Endothelial cell of umbilical vein (primary cell): ENCODE measurements at regions of chr7 and their contacts with region 1.

Region 1: DNA sequence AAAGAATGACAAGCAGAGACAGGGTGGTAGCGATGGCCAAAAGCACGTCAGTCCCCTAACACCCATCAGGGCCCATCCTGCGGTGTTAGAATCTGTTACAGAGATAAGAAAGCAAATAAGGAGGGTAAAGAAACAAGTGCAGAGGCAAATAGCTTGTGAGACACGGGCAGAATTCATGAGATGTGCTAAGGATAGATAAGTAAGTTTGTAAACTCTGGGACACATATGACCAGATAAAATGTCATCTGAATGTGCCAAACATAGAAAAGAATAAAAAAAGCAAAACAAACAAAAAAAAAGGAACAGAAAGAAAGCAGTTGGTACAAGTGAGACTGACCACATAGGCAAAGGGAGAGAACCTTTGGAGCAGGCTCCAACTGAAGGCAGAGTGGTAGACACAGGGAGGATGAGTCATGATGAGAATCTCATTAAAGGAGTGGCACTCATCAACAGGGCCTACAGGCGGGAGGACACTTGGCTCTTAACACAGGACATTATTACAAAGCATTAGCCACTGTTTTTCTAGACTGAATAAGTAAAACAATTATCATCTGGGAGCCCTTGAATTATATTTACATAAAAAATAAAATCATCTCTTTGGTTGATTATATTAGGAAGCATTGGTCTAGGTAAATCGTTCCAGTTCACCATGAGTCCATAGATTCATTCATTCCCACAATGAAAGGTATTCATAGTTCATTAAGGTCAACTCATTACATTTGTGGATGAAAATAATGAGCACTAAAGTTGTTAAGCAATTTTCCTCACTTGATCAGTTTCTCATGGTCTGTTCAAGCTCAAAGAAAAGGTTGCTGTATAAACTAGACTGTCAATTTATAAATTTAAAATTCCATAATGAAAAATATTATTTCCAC is 21.5 kb upstream of the EPHB6 start:
- DNase-seq: no peak
- H3K4me3 ChIP-seq: no peak overlapping the region
- H3K27ac ChIP-seq: no peak overlapping the region
- H3K4me1 ChIP-seq: no peaks in the 10 kb centered on the region
- H3K27me3 ChIP-seq: peaks cover 0 to 2% of the 10 kb centered on the region in 2 experiments
- CTCF ChIP-seq: no peak
- POLR2A ChIP-seq: no peak

Region 2: DNA sequence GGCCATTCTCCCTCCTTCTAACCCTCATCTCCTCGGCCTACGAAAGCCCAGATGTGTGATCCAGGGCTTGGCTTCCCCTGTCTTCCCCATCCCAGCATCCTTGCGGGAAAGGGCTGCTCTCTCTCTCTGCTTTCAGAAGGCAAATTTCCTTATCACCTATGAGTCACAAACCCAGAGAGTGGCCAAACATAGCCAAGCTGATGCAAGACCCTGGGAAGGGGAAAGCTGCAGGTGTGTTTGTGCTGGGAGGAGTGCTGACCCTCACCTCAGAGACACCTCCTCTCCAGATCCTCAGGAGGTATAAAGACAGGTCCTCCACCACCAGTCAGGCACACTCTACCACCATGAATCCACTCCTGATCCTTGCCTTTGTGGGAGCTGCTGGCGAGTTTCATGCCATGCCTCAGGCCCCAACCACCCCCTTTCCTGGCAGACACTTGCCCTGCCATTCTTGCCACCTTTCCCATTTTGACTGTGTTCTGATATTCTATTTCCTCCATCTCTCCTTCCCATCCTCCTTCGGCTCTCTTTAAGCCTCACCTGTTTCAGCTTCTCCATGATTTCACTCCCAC is 73.3 kb before region 1 on chr7:
- CTCF ChIA-PET with region 1: no interaction called
- POLR2A ChIA-PET with region 1: no interaction called
- dilution Hi-C with region 1: no loop called
- intact Hi-C with region 1: no loop called
- DNase-seq: no peak
- H3K4me3 ChIP-seq: no peak overlapping the region
- H3K27ac ChIP-seq: no peak overlapping the region
- H3K4me1 ChIP-seq: no peaks in the 10 kb centered on the region
- H3K27me3 ChIP-seq: peaks cover 3 to 25% of the 10 kb centered on the region in 2 experiments
- CTCF ChIP-seq: no peak
- POLR2A ChIP-seq: no peak

Region 3: DNA sequence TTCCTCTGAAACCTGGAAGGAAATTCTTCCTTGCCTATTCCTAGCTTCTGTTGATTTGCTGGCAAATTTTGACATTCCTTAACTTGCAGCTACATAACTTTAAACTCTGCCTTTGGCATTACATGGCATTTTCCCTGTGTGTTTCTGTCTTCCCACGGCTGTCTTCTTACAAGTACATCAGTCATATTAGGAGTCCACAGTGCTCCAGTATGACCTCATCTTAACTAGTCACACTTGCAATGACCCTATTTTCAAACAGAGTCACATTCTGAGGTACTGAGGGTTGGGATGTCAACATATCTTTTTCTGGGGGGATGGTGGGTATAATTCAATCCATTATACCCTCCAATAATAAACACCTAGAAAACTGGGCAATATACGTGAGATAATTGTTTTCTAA is 15.9 kb before region 1 on chr7:
- CTCF ChIA-PET with region 1: no interaction called
- POLR2A ChIA-PET with region 1: no interaction called
- dilution Hi-C with region 1: no loop called
- intact Hi-C with region 1: loop called (anchors 2 kb)
- DNase-seq: no peak
- H3K4me3 ChIP-seq: no peak overlapping the region
- H3K27ac ChIP-seq: no peak overlapping the region
- H3K4me1 ChIP-seq: peaks cover 3% of the 10 kb centered on the region
- H3K27me3 ChIP-seq: peaks cover 8 to 24% of the 10 kb centered on the region in 2 experiments
- CTCF ChIP-seq: no peak
- POLR2A ChIP-seq: no peak

Region 4: GRCh38 chr7:142866361-142867058 is 33.1 kb after region 1 on chr7:
- CTCF ChIA-PET with region 1: no interaction called
- POLR2A ChIA-PET with region 1: no interaction called
- dilution Hi-C with region 1: no loop called
- intact Hi-C with region 1: loop called (anchors 1 kb)
- DNase-seq: peak; percentile 29
- H3K4me3 ChIP-seq: no peak overlapping the region
- H3K27ac ChIP-seq: no peak overlapping the region
- H3K4me1 ChIP-seq: no peaks in the 10 kb centered on the region
- H3K27me3 ChIP-seq: no peaks in the 10 kb centered on the region
- CTCF ChIP-seq: peak; percentile 39 to 64
- POLR2A ChIP-seq: no peak